H1 (cell line): ENCODE measurements at regions of chr1 and their contacts with region 1.

Region 1: GRCh38 chr1:166432655-166433054 is 265.9 kb upstream of the FAM78B start:
- DNase-seq: no peak
- H3K4me3 ChIP-seq: no peak overlapping the region
- H3K27ac ChIP-seq: no peak overlapping the region
- H3K4me1 ChIP-seq: no peaks in the 10 kb centered on the region
- H3K27me3 ChIP-seq: no peaks in the 10 kb centered on the region
- CTCF ChIP-seq: no peak
- EP300 ChIP-seq: no peak
- POLR2A ChIP-seq: no peak
- RAD21 ChIP-seq: no peak

Region 2: DNA sequence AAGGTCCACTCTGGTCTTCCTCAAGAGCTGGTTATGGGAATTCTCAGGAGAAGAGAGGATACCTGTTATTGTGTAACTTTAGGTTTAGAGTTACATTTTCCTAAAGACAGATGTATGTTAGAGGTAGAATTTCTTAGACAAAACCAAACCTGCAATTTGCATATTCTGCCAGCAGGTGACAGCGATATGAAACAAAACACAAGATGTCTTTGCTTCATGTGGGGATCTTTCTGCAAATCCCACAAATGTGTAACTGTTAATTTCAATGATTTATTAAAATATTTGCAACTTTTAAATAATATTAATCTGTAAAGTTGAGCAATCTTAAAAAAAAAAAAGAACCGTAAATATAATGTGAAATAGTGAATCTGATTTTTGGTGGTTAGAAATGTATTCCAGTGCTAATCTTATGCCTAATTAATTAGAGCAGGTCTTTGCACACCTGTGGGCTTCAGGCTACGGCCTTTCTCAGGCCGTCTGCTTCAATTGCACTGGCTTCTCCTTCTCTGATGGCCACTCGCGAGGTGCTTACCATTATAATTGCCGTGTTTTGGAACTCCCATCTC is 299.3 kb before region 1 on chr1:
- CTCF ChIA-PET with region 1: interaction called, 12 read pairs
- POLR2A ChIA-PET with region 1: no interaction called
- DNase-seq: no peak
- H3K4me3 ChIP-seq: no peak overlapping the region
- H3K27ac ChIP-seq: no peak overlapping the region
- H3K4me1 ChIP-seq: no peaks in the 10 kb centered on the region
- H3K27me3 ChIP-seq: no peaks in the 10 kb centered on the region
- CTCF ChIP-seq: peak in 2 of 3 experiments; percentile 28 to 61; a peak in 2 of 4 replicates
- EP300 ChIP-seq: no peak
- POLR2A ChIP-seq: no peak
- RAD21 ChIP-seq: peak; percentile 69 to 73

Region 3: DNA sequence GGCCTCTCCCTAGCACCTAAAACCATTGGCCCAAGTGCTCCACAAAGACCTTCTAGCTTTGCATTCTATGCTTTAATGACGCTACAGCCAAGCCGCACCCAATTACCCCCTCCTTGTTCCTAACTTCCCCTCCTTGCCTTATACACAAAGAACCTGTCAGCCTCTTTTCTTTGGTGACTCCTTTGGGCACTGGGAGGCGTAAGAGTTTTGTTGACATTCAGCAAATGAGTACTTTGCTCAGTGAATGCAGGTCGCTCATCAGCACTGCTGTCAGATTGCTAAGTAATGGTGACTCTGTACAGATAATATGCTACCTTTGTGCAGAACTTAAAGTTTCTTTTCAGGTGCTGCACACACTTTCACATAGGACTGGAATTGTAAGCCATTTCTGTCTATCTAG is 78.2 kb before region 1 on chr1:
- CTCF ChIA-PET with region 1: interaction called, 14 read pairs
- POLR2A ChIA-PET with region 1: no interaction called
- DNase-seq: no peak
- H3K4me3 ChIP-seq: no peak overlapping the region
- H3K27ac ChIP-seq: no peak overlapping the region
- H3K4me1 ChIP-seq: no peaks in the 10 kb centered on the region
- H3K27me3 ChIP-seq: no peaks in the 10 kb centered on the region
- CTCF ChIP-seq: peak in 1 of 3 experiments; percentile 39; a peak in 1 of 4 replicates
- EP300 ChIP-seq: no peak
- POLR2A ChIP-seq: no peak
- RAD21 ChIP-seq: peak; percentile 36 to 59